ENCODE measurements at regions of chr16 and their contacts with region 1.

Region 1: DNA sequence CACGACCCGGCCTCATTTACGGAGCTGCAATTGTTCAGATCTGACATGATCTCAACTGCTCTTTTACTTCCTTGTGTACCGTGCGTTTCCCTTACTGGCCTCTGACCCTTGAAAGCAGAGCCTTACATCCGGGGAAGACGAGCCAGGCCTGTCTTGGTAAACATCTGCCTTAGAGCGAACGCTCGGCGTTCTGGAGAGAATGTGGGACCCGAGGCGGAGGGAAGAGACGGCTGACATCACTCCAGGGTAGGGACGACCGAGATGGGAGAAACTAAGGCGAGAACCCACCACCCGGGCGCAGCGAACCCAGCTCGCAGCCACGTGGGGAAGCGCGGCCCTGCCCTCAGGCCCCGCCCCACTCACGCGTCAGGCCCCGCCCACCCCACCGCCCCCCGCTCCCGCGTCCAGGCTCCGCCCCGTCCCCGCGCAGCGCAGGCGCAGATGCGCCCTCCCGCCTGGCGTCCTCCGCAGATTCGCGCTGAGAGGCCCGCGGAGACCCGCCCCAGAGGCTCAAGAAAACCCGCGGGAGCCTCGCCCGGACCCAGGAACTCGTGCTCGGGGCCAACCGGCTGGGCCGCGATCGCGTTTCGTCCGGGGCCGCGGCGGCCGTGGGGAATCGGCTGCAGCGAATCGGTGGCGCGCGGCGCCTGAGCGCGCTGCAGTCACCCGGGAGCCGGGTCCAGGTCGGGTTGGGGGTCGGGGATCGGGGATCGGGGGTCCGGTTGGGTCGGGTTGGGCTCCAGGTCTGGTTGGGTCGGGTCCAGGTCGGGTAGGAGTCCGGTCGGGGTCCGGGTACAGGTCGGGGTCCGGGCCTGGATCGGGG is at the start of gene TELO2:
- DNase-seq: peak; percentile 85 to 91
- ATAC-seq: peak; percentile 93 to 95 (median 94)
- H3K4me3 ChIP-seq: peak within 1 kb of the TSS; percentile 81
- H3K27ac ChIP-seq: peak within 1 kb of the TSS; percentile 89
- H3K4me1 ChIP-seq: peaks cover 17% of the 10 kb centered on the region
- H3K27me3 ChIP-seq: no peaks in the 10 kb centered on the region
- CTCF ChIP-seq: no peak
- total RNA-seq, gene TELO2: 15.8 to 23.8 (median 19.6) TPM

Region 2: GRCh38 chr16:1474796-1475551 is 18.2 kb before region 1 on chr16 and contains the start of gene CLCN7:
- intact Hi-C with region 1: loop called in 1 of 2 experiments (anchors 2 kb)
- DNase-seq: peak; percentile 94 to 96
- ATAC-seq: peak; percentile 95 to 99 (median 98)
- H3K4me3 ChIP-seq: peak within 1 kb of the TSS; percentile 91
- H3K27ac ChIP-seq: peak within 1 kb of the TSS; percentile 96
- H3K4me1 ChIP-seq: peaks cover 17% of the 10 kb centered on the region
- H3K27me3 ChIP-seq: no peaks in the 10 kb centered on the region
- CTCF ChIP-seq: no peak
- total RNA-seq, gene CLCN7: 41.2 to 65.4 (median 46.2) TPM

Region 3: DNA sequence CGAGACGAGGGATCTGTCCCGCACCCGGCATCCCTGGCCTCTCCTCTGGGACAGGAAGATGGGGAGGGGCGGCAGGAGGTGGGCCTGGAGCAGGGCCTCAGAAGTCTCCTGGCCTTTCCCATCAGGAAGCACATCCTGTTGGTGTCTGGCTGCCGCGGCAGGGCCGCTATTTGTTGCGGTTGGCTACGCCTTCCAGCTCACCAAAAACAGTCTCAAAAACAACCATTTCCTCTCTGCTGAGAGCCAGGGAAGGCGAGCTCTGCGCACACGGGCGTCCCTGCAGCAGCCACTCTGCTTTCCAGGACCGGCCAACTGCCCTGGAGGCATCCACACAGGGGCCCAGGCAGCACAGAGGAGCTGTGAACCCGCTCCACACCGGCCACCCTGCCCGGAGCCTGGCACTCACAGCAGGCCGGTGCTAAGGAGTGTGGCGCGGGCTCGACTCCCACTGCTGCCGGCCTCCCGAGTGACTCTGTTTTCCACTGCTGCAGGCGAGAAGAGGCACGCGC is 40.4 kb after region 1 on chr16 and contains the start of gene TMEM204:
- intact Hi-C with region 1: loop called in 1 of 2 experiments (anchors 5 kb)
- DNase-seq: peak; percentile 79 to 91
- ATAC-seq: peak; percentile 17 to 54 (median 30)
- H3K4me3 ChIP-seq: peak within 1 kb of the TSS; percentile 72
- H3K27ac ChIP-seq: peak within 1 kb of the TSS; percentile 79
- H3K4me1 ChIP-seq: peaks cover 11% of the 10 kb centered on the region
- H3K27me3 ChIP-seq: no peaks in the 10 kb centered on the region
- CTCF ChIP-seq: no peak
- total RNA-seq, gene TMEM204: 7.5 to 21.7 (median 10.2) TPM

Region 4: DNA sequence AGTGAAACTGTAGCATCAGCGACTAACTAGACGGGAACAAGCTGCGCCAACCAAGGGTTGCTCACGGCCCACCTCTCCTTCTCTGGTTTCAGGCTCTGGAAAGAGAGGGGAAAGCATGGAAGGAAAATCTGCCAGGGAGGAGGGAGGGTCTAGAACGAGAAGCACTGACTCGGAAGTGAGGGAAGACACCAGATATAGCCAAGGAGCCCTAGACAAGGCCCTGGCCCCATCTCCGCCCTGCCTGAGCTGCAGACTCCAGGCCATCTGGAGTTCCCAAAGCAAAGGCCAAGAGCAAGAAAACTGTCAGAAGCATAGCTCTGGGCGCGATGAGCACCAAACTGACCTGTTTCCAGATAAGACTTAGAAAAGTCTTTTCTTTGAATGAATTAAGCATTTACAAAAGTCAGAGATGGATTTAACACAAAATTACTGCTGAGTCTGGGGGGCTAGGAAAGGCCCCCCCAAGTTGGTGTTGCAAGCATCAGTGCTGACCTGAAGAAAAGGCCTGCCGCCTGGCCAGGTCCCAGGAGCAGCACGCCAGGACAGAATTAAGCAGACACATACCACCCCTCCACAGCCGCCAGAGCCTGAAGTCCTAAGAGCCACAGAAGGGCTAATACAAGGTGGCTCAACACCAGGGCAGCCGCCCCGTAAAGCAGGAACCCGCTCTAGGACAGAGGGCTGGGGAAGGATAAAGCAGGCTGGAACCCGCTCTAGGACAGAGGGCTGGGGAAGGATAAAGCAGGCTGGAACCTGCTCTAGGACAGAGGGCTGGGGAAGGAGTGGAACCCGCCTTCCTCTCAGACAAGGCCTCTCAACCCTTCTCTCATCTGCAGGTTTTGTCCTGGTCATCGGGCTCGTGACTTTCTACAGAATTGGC is 61.1 kb after region 1 on chr16:
- intact Hi-C with region 1: loop called in 1 of 2 experiments (anchors 5 kb)
- DNase-seq: no peak
- ATAC-seq: no peak
- H3K4me3 ChIP-seq: no peak overlapping the region
- H3K27ac ChIP-seq: no peak overlapping the region
- H3K4me1 ChIP-seq: peaks cover 14% of the 10 kb centered on the region
- H3K27me3 ChIP-seq: no peaks in the 10 kb centered on the region
- CTCF ChIP-seq: no peak

Region 5: GRCh38 chr16:1564325-1564724 is 71.2 kb after region 1 on chr16:
- intact Hi-C with region 1: loop called in 1 of 2 experiments (anchors 5 kb)
- DNase-seq: no peak
- ATAC-seq: peak in 2 of 4 donors; percentile 54 to 67
- H3K4me3 ChIP-seq: no peak overlapping the region
- H3K27ac ChIP-seq: no peak overlapping the region
- H3K4me1 ChIP-seq: no peaks in the 10 kb centered on the region
- H3K27me3 ChIP-seq: no peaks in the 10 kb centered on the region
- CTCF ChIP-seq: peak; percentile 42

Region 6: DNA sequence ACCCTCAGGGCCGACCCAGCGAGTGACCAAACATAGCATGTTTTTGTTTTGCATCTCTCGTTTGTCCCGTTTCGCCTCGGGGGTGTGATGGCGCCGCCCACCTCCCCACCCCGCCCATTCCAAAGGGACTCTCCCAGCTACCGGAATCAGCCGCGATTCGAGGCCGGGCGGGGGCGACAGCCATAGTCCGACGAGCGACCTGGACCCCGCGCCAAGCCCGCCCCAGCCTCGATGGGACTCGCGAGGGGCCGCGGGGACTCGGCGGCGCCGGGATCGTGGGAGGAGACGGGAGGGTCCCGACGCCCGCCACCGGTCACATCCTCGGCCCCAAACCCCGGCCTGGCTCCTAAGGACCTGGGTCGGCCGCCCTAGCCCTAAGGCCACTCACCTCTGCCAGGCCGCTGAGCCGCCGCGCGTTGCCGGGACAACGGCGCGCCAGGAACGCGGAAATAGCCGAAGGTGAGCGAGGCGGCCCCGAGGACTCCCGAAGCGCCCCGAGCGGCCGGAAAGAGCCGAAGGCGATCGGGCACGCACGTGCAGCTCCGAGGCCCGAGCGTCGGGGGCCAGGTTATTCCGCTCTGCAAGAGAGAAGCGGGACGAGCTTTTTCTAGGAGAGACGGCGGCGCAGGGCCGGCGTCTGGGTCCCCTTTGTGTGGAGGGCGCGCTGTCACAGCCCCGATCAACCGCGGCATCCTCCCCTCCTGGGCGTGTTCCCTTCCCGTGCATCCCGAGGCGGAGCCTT is 117.3 kb after region 1 on chr16:
- intact Hi-C with region 1: loop called (anchors 5 kb)
- DNase-seq: peak; percentile 91 to 95
- ATAC-seq: peak; percentile 69 to 85 (median 74)
- H3K4me3 ChIP-seq: peak overlapping the region; percentile 94
- H3K27ac ChIP-seq: peak overlapping the region; percentile 90
- H3K4me1 ChIP-seq: peaks cover 37% of the 10 kb centered on the region
- H3K27me3 ChIP-seq: no peaks in the 10 kb centered on the region
- CTCF ChIP-seq: no peak

Region 7: GRCh38 chr16:1705688-1706385 is 212.7 kb after region 1 on chr16 and contains the start of gene MAPK8IP3:
- intact Hi-C with region 1: loop called in 1 of 2 experiments (anchors 5 kb)
- DNase-seq: peak; percentile 91 to 96
- ATAC-seq: peak; percentile 91 to 93 (median 92)
- H3K4me3 ChIP-seq: peak within 1 kb of the TSS; percentile 96
- H3K27ac ChIP-seq: peak within 1 kb of the TSS; percentile 99
- H3K4me1 ChIP-seq: peaks cover 29% of the 10 kb centered on the region
- H3K27me3 ChIP-seq: no peaks in the 10 kb centered on the region
- CTCF ChIP-seq: peak; percentile 98
- total RNA-seq, gene MAPK8IP3: 22.6 to 31.6 (median 24.9) TPM